Activated CD4-positive, alpha-beta T cell treated with anti-CD3 and anti-CD28 coated beads, Interleukin-2, amount 10 ng/mL, durations not matched to agents 24 days and 14 days (primary cell): ENCODE measurements at regions of chr1 and their contacts with region 1.

Region 1: GRCh38 chr1:77683160-77684148 is 996 bp upstream of the ZZZ3 start:
- DNase-seq: peak; percentile 97
- H3K4me3 Mint-ChIP-seq: peak overlapping the region; percentile 91
- H3K27ac Mint-ChIP-seq: peak overlapping the region; percentile 94
- H3K4me1 Mint-ChIP-seq: peaks cover 22% of the 10 kb centered on the region
- H3K27me3 Mint-ChIP-seq: no peaks in the 10 kb centered on the region

Region 2: GRCh38 chr1:75724472-75725022 is 1958.9 kb before region 1 on chr1 and contains the start of gene ACADM:
- intact Hi-C with region 1: loop called (anchors 2 kb)
- DNase-seq: peak; percentile 97
- H3K4me3 Mint-ChIP-seq: peak within 1 kb of the TSS; percentile 100
- H3K27ac Mint-ChIP-seq: peak within 1 kb of the TSS; percentile 99
- H3K4me1 Mint-ChIP-seq: peaks cover 32% of the 10 kb centered on the region
- H3K27me3 Mint-ChIP-seq: peaks cover 3% of the 10 kb centered on the region
- total RNA-seq, gene ACADM: 55.3 and 56.7 TPM in 2 replicates

Region 3: GRCh38 chr1:77219166-77219887 is 464.1 kb before region 1 on chr1 and contains the start of gene PIGK:
- intact Hi-C with region 1: loop called (anchors 1 kb)
- DNase-seq: peak; percentile 97
- H3K4me3 Mint-ChIP-seq: peak within 1 kb of the TSS; percentile 94
- H3K27ac Mint-ChIP-seq: peak within 1 kb of the TSS; percentile 90
- H3K4me1 Mint-ChIP-seq: peaks cover 20% of the 10 kb centered on the region
- H3K27me3 Mint-ChIP-seq: no peaks in the 10 kb centered on the region
- total RNA-seq, gene PIGK: 19.3 and 20.3 TPM in 2 replicates

Region 4: GRCh38 chr1:77631751-77632150 is 51.7 kb before region 1 on chr1:
- intact Hi-C with region 1: no loop called
- DNase-seq: no peak
- H3K4me3 Mint-ChIP-seq: no peak overlapping the region
- H3K27ac Mint-ChIP-seq: no peak overlapping the region
- H3K4me1 Mint-ChIP-seq: peaks cover 5% of the 10 kb centered on the region
- H3K27me3 Mint-ChIP-seq: no peaks in the 10 kb centered on the region

Region 5: GRCh38 chr1:77697441-77697840 is 14.0 kb after region 1 on chr1:
- intact Hi-C with region 1: no loop called
- DNase-seq: no peak
- H3K4me3 Mint-ChIP-seq: no peak overlapping the region
- H3K27ac Mint-ChIP-seq: no peak overlapping the region
- H3K4me1 Mint-ChIP-seq: no peaks in the 10 kb centered on the region
- H3K27me3 Mint-ChIP-seq: no peaks in the 10 kb centered on the region

Region 6: DNA sequence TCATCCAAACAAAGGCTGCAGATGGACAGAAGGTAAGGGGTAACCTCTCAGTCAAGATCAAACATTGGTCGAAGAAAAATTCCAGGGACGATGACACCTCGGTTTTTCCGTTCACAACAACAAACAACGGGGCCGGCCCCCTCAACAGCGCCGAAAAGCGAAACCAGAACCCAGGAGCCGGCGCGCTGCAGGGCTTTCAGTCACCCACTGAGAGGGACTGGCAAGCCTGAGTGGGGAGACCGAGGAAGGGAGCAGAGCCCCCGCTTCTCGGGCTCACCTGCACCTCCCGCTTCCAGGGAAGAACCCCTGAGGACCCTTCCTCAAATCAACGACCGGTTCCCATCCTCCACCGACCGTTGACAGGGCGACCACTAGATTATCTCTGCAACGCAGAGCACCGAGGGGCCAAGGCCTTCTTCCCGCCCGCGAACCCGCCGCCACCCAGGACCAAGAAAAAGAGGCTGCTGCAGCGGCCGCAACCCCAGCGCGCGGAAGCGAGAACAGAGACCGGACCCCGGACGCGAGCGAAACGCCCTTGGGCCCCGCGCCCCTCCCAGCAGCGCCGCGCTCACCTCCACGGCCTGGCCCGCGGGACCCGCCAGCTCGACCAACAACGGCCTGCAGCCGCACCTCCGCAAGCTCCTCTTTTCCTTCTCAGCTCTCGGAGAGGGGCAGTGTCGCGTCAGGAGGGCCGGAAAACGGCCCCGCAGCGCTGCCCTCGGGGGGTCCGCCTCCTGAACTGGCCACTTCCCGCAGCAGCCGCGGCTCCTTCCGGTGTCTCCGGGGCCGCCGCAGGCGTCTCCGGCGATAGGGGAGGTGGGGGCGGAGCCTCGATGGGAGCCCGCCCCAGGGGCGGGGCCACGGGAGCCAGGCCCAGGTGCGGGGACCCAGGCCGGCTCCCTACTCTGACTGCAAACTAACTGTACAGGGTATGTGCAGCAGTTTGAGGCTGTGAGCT is 75.9 kb after region 1 on chr1 and contains the start of gene USP33:
- intact Hi-C with region 1: loop called (anchors 1 kb)
- DNase-seq: peak; percentile 98
- H3K4me3 Mint-ChIP-seq: peak within 1 kb of the TSS; percentile 95
- H3K27ac Mint-ChIP-seq: peak within 1 kb of the TSS; percentile 96
- H3K4me1 Mint-ChIP-seq: peaks cover 27% of the 10 kb centered on the region
- H3K27me3 Mint-ChIP-seq: peaks cover 2% of the 10 kb centered on the region
- total RNA-seq, gene USP33: 39.9 and 47.4 TPM in 2 replicates

Region 7: GRCh38 chr1:77978969-77979876 is 295.8 kb after region 1 on chr1 and contains the start of gene FUBP1:
- intact Hi-C with region 1: loop called (anchors 1 kb)
- DNase-seq: peak; percentile 99
- H3K4me3 Mint-ChIP-seq: no peak within 1 kb of the TSS
- H3K27ac Mint-ChIP-seq: no peak within 1 kb of the TSS
- H3K4me1 Mint-ChIP-seq: peaks cover 36% of the 10 kb centered on the region
- H3K27me3 Mint-ChIP-seq: no peaks in the 10 kb centered on the region
- total RNA-seq, gene FUBP1: 278 and 284 TPM in 2 replicates

Region 8: DNA sequence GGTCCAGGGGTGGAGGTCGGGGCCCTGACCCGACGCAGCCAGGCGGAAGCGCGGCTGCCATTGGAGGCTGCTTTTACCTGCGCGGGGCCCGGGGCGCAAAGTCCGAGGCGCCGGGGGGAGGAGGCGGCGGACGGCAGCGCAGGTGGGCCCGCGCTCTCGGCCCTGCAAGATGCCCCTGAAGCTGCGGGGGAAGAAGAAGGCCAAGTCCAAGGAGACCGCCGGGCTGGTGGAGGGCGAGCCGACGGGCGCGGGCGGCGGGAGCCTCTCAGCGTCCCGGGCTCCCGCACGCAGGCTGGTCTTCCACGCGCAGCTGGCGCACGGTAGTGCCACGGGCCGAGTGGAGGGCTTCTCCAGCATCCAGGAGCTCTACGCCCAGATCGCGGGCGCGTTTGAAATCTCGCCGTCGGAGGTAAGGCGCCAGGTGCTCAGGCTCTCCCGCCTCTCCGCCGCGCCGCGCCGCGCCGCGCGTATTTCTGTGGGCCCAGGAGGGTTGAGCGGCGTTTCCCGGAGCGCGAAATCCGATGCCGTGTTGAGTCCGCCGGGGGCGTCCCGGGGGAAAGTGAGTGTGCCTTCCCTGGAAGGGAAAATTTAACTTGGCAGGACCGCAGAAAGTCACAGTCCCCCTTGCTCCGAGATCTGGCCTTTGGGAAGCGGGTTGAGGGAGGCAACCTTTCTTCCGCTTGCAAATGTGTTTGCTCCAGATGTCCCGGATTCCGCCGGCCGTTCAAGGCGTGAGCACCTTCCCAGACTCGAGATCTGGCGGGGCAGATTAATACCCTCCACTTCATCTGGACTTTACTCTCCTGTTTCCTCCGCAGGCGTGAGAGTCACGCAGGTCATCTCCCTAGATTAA is 362.7 kb after region 1 on chr1 and contains the start of gene GIPC2:
- intact Hi-C with region 1: loop called (anchors 2 kb)
- DNase-seq: peak; percentile 72
- H3K4me3 Mint-ChIP-seq: peak within 1 kb of the TSS; percentile 81
- H3K27ac Mint-ChIP-seq: peak within 1 kb of the TSS; percentile 30
- H3K4me1 Mint-ChIP-seq: peaks cover 25% of the 10 kb centered on the region
- H3K27me3 Mint-ChIP-seq: peaks cover 47% of the 10 kb centered on the region
- total RNA-seq, gene GIPC2: 0.05 TPM in 1 of 2 replicates, not detected in the other